CD14-positive monocyte (primary cell): ENCODE measurements at regions of chr12 and their contacts with region 1.

Region 1: DNA sequence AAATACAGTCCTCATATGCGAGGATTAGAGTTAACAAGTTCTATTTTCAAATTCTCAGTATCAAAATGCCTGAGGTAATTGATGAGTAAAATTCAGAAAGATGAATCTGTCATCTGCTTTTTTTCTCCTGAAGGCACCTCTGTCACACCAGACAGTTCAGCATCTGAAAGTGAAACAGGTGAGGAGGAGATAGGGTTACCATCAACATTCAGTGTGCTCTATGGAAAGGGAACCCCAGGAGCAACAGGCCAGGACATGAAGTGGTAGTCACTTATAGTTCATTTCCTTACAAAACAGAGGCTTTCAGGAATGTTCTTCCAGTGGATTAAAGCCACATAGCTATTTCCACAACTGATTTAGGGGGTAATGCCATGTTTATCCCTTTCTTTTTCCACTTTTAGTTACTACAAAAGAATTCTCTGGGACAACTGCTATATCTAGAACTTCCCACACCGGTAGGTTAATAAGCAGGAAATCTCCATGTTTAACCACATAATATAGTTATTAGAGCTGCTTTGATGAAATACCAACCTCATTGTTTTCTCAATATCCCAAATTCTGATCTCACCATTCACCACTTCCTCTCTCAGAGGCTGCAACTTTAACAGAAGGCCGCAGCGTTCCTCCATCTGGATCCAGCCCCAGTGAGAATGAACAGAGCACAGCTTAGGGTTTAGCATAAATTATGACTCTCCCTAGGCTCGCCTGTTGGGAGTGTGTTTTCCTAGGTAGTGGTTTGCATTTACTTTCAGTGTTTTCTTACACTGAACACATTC is 177.0 kb upstream of the CNTN1 start:
- DNase-seq: no peak
- H3K4me3 ChIP-seq: no peak overlapping the region
- H3K4me3 Mint-ChIP-seq: no peak overlapping the region
- H3K27ac ChIP-seq: no peak overlapping the region
- H3K27ac Mint-ChIP-seq: peak overlapping the region in 1 of 7 donors; percentile 36
- H3K4me1 ChIP-seq: peaks cover 7 to 14% of the 10 kb centered on the region in 2 donors
- H3K4me1 Mint-ChIP-seq: peaks cover 21% of the 10 kb centered on the region
- H3K27me3 ChIP-seq: peaks cover 0 to 2% of the 10 kb centered on the region in 2 donors
- H3K27me3 Mint-ChIP-seq: peaks cover 0 to 2% (median 1%) of the 10 kb centered on the region in 3 donors
- CTCF ChIP-seq: no peak

Region 2: DNA sequence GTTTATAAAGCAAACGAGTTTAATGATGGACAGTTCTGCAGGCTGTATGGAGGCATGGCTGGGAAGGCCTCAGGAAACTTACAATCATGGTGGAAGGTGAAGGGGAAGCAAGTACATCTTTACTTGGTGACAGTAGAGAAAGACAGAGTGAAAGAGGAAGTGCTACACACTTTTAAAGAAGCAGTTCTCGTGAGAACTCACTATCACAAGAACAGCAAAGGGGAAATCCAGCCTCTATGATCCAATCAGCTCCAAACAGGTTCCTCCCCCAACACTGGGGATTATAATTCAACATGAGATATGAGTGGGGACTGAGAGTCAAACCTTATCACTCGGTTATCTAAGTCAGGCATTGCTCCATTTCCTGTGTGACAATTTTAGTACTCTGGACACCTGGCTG is 12.9 kb before region 1 on chr12:
- intact Hi-C with region 1: loop called in 1 of 2 experiments (anchors 1 kb)
- DNase-seq: no peak
- H3K4me3 ChIP-seq: no peak overlapping the region
- H3K4me3 Mint-ChIP-seq: no peak overlapping the region
- H3K27ac ChIP-seq: no peak overlapping the region
- H3K27ac Mint-ChIP-seq: no peak overlapping the region
- H3K4me1 ChIP-seq: no peaks in the 10 kb centered on the region
- H3K4me1 Mint-ChIP-seq: peaks cover 2% of the 10 kb centered on the region
- H3K27me3 ChIP-seq: no peaks in the 10 kb centered on the region
- H3K27me3 Mint-ChIP-seq: no peaks in the 10 kb centered on the region
- CTCF ChIP-seq: no peak

Region 3: DNA sequence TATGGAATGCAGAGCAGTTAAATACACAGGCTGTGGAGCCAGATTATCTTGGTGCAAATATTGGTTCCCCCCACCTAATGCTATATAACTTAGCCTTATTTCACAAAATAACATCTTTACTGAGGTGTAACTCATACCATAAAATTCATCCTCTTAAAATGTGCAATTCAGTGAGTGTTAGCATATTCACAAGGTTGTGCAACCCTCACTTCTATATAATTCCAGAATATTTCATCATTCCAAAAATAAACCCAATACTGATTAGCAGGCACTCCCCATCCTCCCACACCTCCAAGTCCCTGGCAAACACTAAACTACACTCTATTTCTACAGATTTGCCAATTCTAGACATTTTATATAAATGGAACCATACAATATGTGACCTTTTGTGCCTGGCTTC is 60.8 kb after region 1 on chr12:
- intact Hi-C with region 1: no loop called
- DNase-seq: no peak
- H3K4me3 ChIP-seq: no peak overlapping the region
- H3K4me3 Mint-ChIP-seq: no peak overlapping the region
- H3K27ac ChIP-seq: no peak overlapping the region
- H3K27ac Mint-ChIP-seq: no peak overlapping the region
- H3K4me1 ChIP-seq: no peaks in the 10 kb centered on the region
- H3K4me1 Mint-ChIP-seq: no peaks in the 10 kb centered on the region
- H3K27me3 ChIP-seq: no peaks in the 10 kb centered on the region
- H3K27me3 Mint-ChIP-seq: peaks cover 0 to 2% (median 2%) of the 10 kb centered on the region in 3 donors
- CTCF ChIP-seq: no peak